Right cardiac atrium (tissue), 5 donors: ENCODE measurements at regions of chr3 and their contacts with region 1.

Region 1: GRCh38 chr3:115783938-115784738 is 160.8 kb downstream of the GAP43 start:
- DNase-seq: peak; percentile 92 to 96 (median 96)
- ATAC-seq: peak; percentile 97
- H3K4me3 ChIP-seq: peak overlapping the region; percentile 55
- H3K27ac ChIP-seq: peak overlapping the region; percentile 40
- H3K4me1 ChIP-seq: no peaks in the 10 kb centered on the region
- H3K27me3 ChIP-seq: no peaks in the 10 kb centered on the region

Region 2: DNA sequence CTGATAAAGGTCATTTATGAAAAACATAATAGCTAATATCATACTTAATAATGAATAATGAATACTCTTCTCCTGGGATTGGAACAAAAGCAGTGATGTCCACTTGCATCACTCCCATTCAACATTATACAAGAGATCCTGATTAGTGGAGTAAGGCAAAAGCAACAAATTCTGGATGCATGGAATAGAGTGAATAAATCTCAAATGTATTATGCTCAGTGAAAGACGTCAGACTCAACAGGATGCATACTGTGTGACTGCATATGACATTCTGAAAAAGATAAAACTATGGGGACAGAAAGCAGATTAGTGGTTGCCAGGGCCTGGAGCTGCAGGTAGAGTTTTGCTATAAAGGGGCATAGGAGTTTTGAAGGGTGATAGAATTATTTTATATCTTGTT is 559.5 kb before region 1 on chr3:
- intact Hi-C with region 1: loop called (anchors 5 to 10 kb)
- DNase-seq: no peak
- ATAC-seq: no peak
- H3K4me3 ChIP-seq: no peak overlapping the region
- H3K27ac ChIP-seq: no peak overlapping the region
- H3K4me1 ChIP-seq: no peaks in the 10 kb centered on the region
- H3K27me3 ChIP-seq: no peaks in the 10 kb centered on the region

Region 3: GRCh38 chr3:116306720-116307119 is 522.6 kb after region 1 on chr3:
- intact Hi-C with region 1: no loop called
- DNase-seq: no peak
- ATAC-seq: no peak
- H3K4me3 ChIP-seq: no peak overlapping the region
- H3K27ac ChIP-seq: no peak overlapping the region
- H3K4me1 ChIP-seq: peaks cover 1% of the 10 kb centered on the region
- H3K27me3 ChIP-seq: no peaks in the 10 kb centered on the region